WTC11 (cell line): ENCODE measurements at regions of chr7 and their contacts with region 1.

Region 1: DNA sequence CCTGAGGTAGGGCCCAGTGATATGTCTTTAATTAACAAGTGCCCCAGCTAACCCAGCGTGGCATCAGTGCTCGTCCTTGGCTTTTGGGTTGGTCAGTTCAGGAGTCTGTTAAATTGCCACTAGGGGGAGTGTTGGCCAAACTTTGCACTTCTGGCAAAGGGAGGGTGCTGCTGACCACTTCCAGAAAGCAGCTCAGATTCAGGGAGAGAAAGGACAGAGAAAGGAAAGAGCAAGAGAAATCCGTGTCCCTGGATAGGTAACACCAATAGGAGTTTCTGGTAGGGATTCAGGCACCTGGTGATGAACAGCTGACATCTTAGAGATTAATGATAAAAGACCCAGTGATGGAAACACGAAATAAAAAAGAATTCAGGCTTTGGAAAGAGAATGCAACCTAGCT is 243.1 kb upstream of the AOAH start:
- DNase-seq: peak; percentile 65
- ATAC-seq: peak; percentile 96
- H3K4me3 Mint-ChIP-seq: no peak overlapping the region
- H3K27ac Mint-ChIP-seq: no peak overlapping the region; the same call in 1 of the 2 replicates
- H3K4me1 Mint-ChIP-seq: peaks cover 49% of the 10 kb centered on the region
- H3K27me3 Mint-ChIP-seq: no peaks in the 10 kb centered on the region
- CTCF ChIP-seq: peak; percentile 78

Region 2: DNA sequence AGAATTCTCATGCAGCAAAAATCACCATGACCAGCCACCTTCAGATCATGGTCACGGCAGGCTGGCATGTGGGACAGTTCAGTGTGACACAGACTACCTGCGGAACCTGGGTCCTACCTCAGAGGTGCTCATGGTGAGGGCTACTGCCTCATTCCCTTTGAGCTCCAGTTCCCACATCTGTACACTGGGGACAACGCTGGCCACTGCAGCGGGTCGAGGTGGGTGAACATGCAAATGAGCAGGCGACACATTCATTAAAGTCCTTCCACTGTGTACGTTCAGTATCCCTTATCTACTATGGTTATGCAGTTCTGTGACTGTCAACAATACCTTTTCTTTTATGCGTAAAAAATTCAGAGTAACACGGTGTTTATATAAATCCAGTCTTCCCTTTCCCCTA is 24.4 kb before region 1 on chr7:
- CTCF ChIA-PET with region 1: interaction called, 11 read pairs
- POLR2A ChIA-PET with region 1: no interaction called
- DNase-seq: no peak
- ATAC-seq: no peak
- H3K4me3 Mint-ChIP-seq: no peak overlapping the region
- H3K27ac Mint-ChIP-seq: no peak overlapping the region
- H3K4me1 Mint-ChIP-seq: peaks cover 39% of the 10 kb centered on the region
- H3K27me3 Mint-ChIP-seq: no peaks in the 10 kb centered on the region; the same call in 1 of the 2 replicates
- CTCF ChIP-seq: no peak

Region 3: GRCh38 chr7:36979810-36980248 is 12.4 kb after region 1 on chr7:
- CTCF ChIA-PET with region 1: interaction called, 26 read pairs
- POLR2A ChIA-PET with region 1: interaction called, 4 read pairs
- DNase-seq: no peak
- ATAC-seq: no peak
- H3K4me3 Mint-ChIP-seq: no peak overlapping the region
- H3K27ac Mint-ChIP-seq: no peak overlapping the region
- H3K4me1 Mint-ChIP-seq: peaks cover 14% of the 10 kb centered on the region
- H3K27me3 Mint-ChIP-seq: no peaks in the 10 kb centered on the region
- CTCF ChIP-seq: no peak

Region 4: DNA sequence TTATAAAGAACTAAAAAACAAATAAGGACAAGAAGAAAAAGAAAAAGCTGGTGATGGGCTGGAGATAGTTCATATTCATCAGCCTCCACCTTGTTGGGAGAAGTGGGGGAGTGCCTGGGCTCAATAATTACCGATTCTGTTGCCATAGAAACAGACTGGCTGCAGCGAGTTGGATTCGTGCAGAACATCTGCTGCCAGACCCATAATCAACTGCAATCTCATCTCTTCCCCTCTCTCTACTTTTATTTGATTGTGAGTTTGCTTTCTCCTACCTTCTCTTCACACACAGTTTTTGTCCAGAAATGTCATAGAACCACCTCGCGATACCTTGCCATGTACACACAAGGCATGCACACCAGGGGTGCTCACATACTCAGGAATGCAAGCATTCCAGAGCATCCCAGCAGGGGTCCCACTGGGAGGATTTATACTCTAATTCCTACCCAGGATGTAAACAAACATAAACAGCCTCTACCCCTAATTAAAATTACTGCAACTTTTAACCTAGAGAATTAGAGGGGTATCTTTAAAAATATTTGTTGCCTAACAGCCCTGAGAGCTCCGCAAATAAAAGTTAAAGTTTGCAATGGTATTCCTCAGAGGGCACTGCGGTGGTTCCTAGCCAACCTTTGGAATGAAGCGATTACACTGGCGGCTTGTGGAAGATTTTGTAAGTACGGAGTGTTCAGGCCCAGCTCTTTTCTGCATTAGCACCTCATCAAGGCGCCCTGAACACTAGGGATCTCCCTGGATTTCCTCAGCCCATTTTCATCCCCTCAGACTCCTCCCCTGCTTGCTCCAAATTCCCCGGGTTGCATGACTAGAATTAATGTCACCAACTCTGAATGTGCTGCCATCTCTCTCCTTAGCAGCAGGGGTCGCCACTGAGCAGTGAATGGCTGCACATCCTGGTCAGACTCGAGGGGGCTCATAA is 19.3 kb after region 1 on chr7:
- CTCF ChIA-PET with region 1: interaction called, 26 read pairs
- POLR2A ChIA-PET with region 1: no interaction called
- DNase-seq: peak; percentile 86
- ATAC-seq: peak; percentile 90
- H3K4me3 Mint-ChIP-seq: peak overlapping the region; percentile 8
- H3K27ac Mint-ChIP-seq: 0 out of 2 replicates have a peak overlapping the region, but pooled peaks have one; percentile 58
- H3K4me1 Mint-ChIP-seq: peaks cover 33% of the 10 kb centered on the region
- H3K27me3 Mint-ChIP-seq: no peaks in the 10 kb centered on the region
- CTCF ChIP-seq: peak; percentile 85

Region 5: GRCh38 chr7:37045681-37046179 is 78.3 kb after region 1 on chr7:
- CTCF ChIA-PET with region 1: interaction called, 14 read pairs
- POLR2A ChIA-PET with region 1: no interaction called
- DNase-seq: no peak
- ATAC-seq: no peak
- H3K4me3 Mint-ChIP-seq: no peak overlapping the region
- H3K27ac Mint-ChIP-seq: no peak overlapping the region
- H3K4me1 Mint-ChIP-seq: peaks cover 26% of the 10 kb centered on the region
- H3K27me3 Mint-ChIP-seq: no peaks in the 10 kb centered on the region
- CTCF ChIP-seq: no peak

Region 6: GRCh38 chr7:37201003-37201875 is 233.9 kb after region 1 on chr7:
- CTCF ChIA-PET with region 1: interaction called, 24 read pairs
- POLR2A ChIA-PET with region 1: no interaction called
- DNase-seq: peak; percentile 85
- ATAC-seq: peak; percentile 93
- H3K4me3 Mint-ChIP-seq: no peak overlapping the region
- H3K27ac Mint-ChIP-seq: no peak overlapping the region
- H3K4me1 Mint-ChIP-seq: peaks cover 14% of the 10 kb centered on the region
- H3K27me3 Mint-ChIP-seq: no peaks in the 10 kb centered on the region
- CTCF ChIP-seq: peak; percentile 33